ENCODE measurements at regions of chr2 and their contacts with region 1.

Region 1: DNA sequence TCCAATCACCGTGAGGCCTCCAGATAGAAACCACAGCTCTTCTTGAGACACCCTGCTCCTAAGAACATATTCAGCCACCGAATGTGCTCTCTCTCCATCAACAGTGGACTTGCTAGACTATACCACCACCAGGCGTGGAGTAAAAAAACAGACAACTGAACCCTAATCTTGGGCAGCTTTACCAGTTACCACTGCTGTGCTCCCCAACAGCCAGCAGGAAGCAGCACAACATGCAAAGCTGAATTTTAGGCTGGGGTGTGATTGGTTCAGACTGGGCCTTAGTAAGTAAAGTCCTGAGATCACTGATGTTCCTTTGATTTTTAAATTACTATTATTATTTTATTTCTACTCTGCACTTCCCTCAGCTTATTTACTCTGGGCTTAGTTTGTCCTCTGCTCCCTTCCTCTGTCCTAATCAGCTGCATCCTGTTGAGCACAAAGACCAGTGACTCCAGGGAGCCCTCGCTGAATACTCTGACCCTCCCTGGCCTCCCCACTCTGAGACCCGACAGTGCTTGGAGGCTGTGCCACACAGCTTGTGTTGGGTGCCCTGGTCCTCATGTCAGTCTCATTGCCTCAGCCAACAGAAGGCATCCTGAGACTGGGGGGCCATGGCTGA is 21.9 kb downstream of the MRPL35 start:
- DNase-seq: no peak
- H3K4me3 ChIP-seq: no peak overlapping the region
- H3K27ac ChIP-seq: peak overlapping the region; percentile 91 to 98 (median 93)
- H3K4me1 ChIP-seq: peaks cover 48 to 56% (median 55%) of the 10 kb centered on the region in 4 donors
- H3K27me3 ChIP-seq: no peaks in the 10 kb centered on the region
- CTCF ChIP-seq: peak; percentile 92 to 99 (median 97)
- EP300 ChIP-seq: no peak
- POLR2A ChIP-seq: no peak

Region 2: GRCh38 chr2:85999061-85999831 is 221.9 kb before region 1 on chr2:
- intact Hi-C with region 1: no loop called
- DNase-seq: no peak
- H3K4me3 ChIP-seq: peak overlapping the region in 1 of 4 donors; percentile 5
- H3K27ac ChIP-seq: peak overlapping the region; percentile 73 to 88 (median 82)
- H3K4me1 ChIP-seq: peaks cover 47 to 64% (median 58%) of the 10 kb centered on the region in 4 donors
- H3K27me3 ChIP-seq: no peaks in the 10 kb centered on the region
- CTCF ChIP-seq: no peak
- EP300 ChIP-seq: no peak
- POLR2A ChIP-seq: no peak

Region 3: GRCh38 chr2:86298411-86299379 is 77.5 kb after region 1 on chr2:
- intact Hi-C with region 1: loop called (anchors 5 kb)
- DNase-seq: no peak
- H3K4me3 ChIP-seq: no peak overlapping the region
- H3K27ac ChIP-seq: peak overlapping the region; percentile 80 to 86 (median 82)
- H3K4me1 ChIP-seq: peaks cover 55 to 95% (median 92%) of the 10 kb centered on the region in 4 donors
- H3K27me3 ChIP-seq: no peaks in the 10 kb centered on the region
- CTCF ChIP-seq: peak; percentile 44 to 47 (median 46)
- EP300 ChIP-seq: no peak
- POLR2A ChIP-seq: no peak

Region 4: GRCh38 chr2:86366651-86367498 is 145.7 kb after region 1 on chr2:
- intact Hi-C with region 1: loop called (anchors 2 kb)
- DNase-seq: peak; percentile 85
- H3K4me3 ChIP-seq: no peak overlapping the region
- H3K27ac ChIP-seq: no peak overlapping the region
- H3K4me1 ChIP-seq: peaks cover 6 to 13% (median 10%) of the 10 kb centered on the region in 4 donors
- H3K27me3 ChIP-seq: no peaks in the 10 kb centered on the region
- CTCF ChIP-seq: no peak
- EP300 ChIP-seq: no peak
- POLR2A ChIP-seq: no peak

Measured in esophagus muscularis mucosa (tissue), 4 donors.